Caco-2 (cell line): ENCODE measurements at regions of chr6 and their contacts with region 1.

Region 1: GRCh38 chr6:150865406-150866146 is at the start of gene MTHFD1L:
- DNase-seq: peak; percentile 81 to 88
- H3K4me3 ChIP-seq: peak within 1 kb of the TSS; percentile 85
- H3K4me3 Mint-ChIP-seq: peak within 1 kb of the TSS; percentile 94
- H3K27ac Mint-ChIP-seq: peak within 1 kb of the TSS; percentile 73
- H3K4me1 ChIP-seq: no peaks in the 10 kb centered on the region
- H3K4me1 Mint-ChIP-seq: no peaks in the 10 kb centered on the region
- H3K27me3 ChIP-seq: no peaks in the 10 kb centered on the region
- H3K27me3 Mint-ChIP-seq: no peaks in the 10 kb centered on the region
- CTCF ChIP-seq: peak in 1 of 2 experiments; percentile 55
- total RNA-seq, gene MTHFD1L: 101 and 102 TPM in 2 replicates

Region 2: GRCh38 chr6:150881911-150882481 is 16.4 kb after region 1 on chr6:
- CTCF ChIA-PET with region 1: interaction called, 6 read pairs
- POLR2A ChIA-PET with region 1: interaction called, 9 read pairs
- intact Hi-C with region 1: loop called (anchors 1 kb)
- DNase-seq: peak; percentile 76 to 85
- H3K4me3 ChIP-seq: no peak overlapping the region
- H3K4me3 Mint-ChIP-seq: no peak overlapping the region
- H3K27ac Mint-ChIP-seq: peak overlapping the region; percentile 57
- H3K4me1 ChIP-seq: peaks cover 18% of the 10 kb centered on the region
- H3K4me1 Mint-ChIP-seq: peaks cover 16% of the 10 kb centered on the region
- H3K27me3 ChIP-seq: no peaks in the 10 kb centered on the region
- H3K27me3 Mint-ChIP-seq: no peaks in the 10 kb centered on the region
- CTCF ChIP-seq: no peak

Region 3: GRCh38 chr6:150949526-150949925 is 84.0 kb after region 1 on chr6:
- CTCF ChIA-PET with region 1: no interaction called
- POLR2A ChIA-PET with region 1: no interaction called
- intact Hi-C with region 1: no loop called
- DNase-seq: no peak
- H3K4me3 ChIP-seq: no peak overlapping the region
- H3K4me3 Mint-ChIP-seq: no peak overlapping the region
- H3K27ac Mint-ChIP-seq: no peak overlapping the region
- H3K4me1 ChIP-seq: no peaks in the 10 kb centered on the region
- H3K4me1 Mint-ChIP-seq: no peaks in the 10 kb centered on the region
- H3K27me3 ChIP-seq: no peaks in the 10 kb centered on the region
- H3K27me3 Mint-ChIP-seq: no peaks in the 10 kb centered on the region
- CTCF ChIP-seq: no peak